ENCODE measurements at regions of chr7 and their contacts with region 1.

Region 1: DNA sequence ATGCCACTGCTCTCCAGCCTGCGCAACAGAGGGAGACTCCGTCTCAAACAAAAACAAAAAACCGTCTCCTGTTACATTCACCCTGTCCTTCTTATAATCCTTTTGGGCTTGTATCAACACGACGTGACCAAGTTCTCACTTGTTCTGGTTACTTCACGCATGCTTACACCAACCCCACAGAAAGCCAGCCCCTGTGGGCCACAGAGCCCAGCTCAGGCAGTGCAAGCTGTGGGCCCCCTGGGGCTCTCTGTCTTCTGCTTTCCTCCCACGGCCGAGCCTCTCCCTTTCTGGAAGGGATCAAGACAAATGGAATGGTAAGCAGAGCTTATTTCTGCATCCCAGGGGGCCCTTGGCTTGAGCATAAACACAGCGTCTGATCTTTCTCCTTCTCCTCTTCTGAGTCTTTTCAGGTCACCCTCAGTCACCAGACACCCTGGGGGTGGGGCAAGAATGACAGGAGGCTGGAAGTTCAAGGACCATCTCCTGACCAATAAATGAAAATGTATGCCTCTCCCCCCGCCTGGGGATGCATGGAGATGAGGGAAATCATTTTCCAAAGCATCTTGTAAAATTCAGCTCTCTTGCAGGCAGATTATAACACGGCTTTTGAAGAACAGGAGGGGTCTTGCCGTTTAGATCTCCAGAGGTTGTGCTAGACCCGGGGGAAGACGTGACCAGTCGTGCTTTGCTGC is 19.0 kb upstream of the TRIM56 start:
- DNase-seq: no peak
- H3K4me3 ChIP-seq: no peak overlapping the region
- CTCF ChIP-seq: no peak
- POLR2A ChIP-seq: no peak

Region 2: GRCh38 chr7:100901921-100902332 is 164.4 kb before region 1 on chr7:
- intact Hi-C with region 1: loop called (anchors 5 kb)
- DNase-seq: no peak
- H3K4me3 ChIP-seq: no peak overlapping the region
- CTCF ChIP-seq: no peak
- POLR2A ChIP-seq: no peak

Measured in lower leg skin (tissue), 4 donors.